Naive thymus-derived CD4-positive, alpha-beta T cell (primary cell): ENCODE measurements at regions of chr4 and their contacts with region 1.

Region 1: DNA sequence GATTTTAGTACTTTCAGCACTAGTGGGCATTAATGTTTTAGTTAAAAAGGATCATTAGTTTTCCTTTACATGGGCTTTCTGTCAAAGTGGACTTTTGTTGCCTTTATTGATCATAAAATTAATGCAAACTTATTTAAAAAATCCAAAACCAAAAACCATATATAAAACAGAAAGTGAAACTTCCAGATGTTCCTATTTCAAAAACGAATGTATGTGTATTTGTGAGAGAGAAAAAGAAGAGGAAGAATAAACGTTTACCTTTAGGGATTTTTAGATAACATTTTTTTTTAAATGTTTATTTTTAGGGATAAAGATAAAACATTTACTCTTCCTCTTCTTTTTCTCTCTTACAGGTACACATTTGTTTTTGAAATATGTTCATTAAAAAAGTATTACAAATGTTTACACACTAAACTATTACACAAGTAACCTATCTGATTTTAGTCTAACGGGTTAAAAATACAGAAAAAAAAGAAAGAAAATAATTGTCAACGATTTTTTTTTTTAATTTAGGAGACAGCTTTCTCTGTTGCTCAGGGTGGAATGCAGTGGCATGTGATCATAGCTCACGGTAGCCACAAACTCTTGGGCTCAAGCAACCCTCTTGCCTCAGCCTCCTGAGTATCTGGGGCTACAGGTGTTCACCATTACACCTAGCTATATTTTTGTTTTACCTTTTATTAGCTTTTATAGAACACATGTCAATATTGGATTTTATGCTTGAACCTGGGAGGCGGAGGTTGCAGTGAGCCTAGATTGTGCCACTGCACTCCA is 16.8 kb upstream of the COX18 start:
- DNase-seq: peak in 1 of 9 donors; percentile 4
- ATAC-seq: no peak
- H3K4me3 ChIP-seq: peak overlapping the region; percentile 25
- H3K4me3 Mint-ChIP-seq: peak overlapping the region; percentile 60 to 76 (median 72)
- H3K27ac ChIP-seq: peak overlapping the region; percentile 65
- H3K27ac Mint-ChIP-seq: peak overlapping the region; percentile 38 to 80 (median 63)
- H3K4me1 ChIP-seq: no peaks in the 10 kb centered on the region
- H3K4me1 Mint-ChIP-seq: peaks cover 10 to 28% (median 16%) of the 10 kb centered on the region in 7 donors
- H3K27me3 ChIP-seq: no peaks in the 10 kb centered on the region
- H3K27me3 Mint-ChIP-seq: no peaks in the 10 kb centered on the region

Region 2: DNA sequence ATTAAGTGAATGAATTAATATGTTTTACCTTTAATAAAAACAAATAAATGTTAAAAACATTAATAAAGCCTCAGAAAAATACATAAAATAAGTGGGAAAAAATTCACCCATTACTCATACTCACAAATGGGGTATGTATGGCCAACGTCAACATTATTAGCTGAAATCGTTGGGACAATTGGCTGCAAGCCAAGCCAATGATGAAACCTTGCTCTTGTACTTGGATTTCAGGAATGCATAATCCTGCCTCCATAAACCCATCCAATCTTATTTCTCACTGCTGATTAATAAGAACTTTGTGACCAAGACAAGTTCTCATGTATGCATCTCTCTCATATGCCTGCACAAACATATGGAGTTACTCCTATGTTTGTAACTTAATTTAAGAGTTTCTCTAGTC is 482.0 kb before region 1 on chr4:
- CTCF ChIA-PET with region 1: no interaction called
- POLR2A ChIA-PET with region 1: no interaction called
- intact Hi-C with region 1: no loop called
- DNase-seq: no peak
- ATAC-seq: no peak
- H3K4me3 ChIP-seq: no peak overlapping the region
- H3K4me3 Mint-ChIP-seq: no peak overlapping the region
- H3K27ac ChIP-seq: no peak overlapping the region
- H3K27ac Mint-ChIP-seq: no peak overlapping the region
- H3K4me1 ChIP-seq: no peaks in the 10 kb centered on the region
- H3K4me1 Mint-ChIP-seq: no peaks in the 10 kb centered on the region
- H3K27me3 ChIP-seq: peaks cover 0 to 5% of the 10 kb centered on the region in 2 donors
- H3K27me3 Mint-ChIP-seq: no peaks in the 10 kb centered on the region

Region 3: GRCh38 chr4:73069338-73070073 is 16.8 kb before region 1 on chr4 and contains the start of gene COX18:
- CTCF ChIA-PET with region 1: no interaction called
- POLR2A ChIA-PET with region 1: interaction called, 6 read pairs
- intact Hi-C with region 1: loop called (anchors 1 kb)
- DNase-seq: peak; percentile 90 to 93 (median 91)
- ATAC-seq: peak; percentile 87
- H3K4me3 ChIP-seq: peak within 1 kb of the TSS; percentile 79
- H3K4me3 Mint-ChIP-seq: peak within 1 kb of the TSS; percentile 86 to 97 (median 90)
- H3K27ac ChIP-seq: peak within 1 kb of the TSS; percentile 98
- H3K27ac Mint-ChIP-seq: peak within 1 kb of the TSS; percentile 93 to 99 (median 98)
- H3K4me1 ChIP-seq: peaks cover 25 to 29% of the 10 kb centered on the region in 2 donors
- H3K4me1 Mint-ChIP-seq: peaks cover 24 to 46% (median 39%) of the 10 kb centered on the region in 7 donors
- H3K27me3 ChIP-seq: no peaks in the 10 kb centered on the region
- H3K27me3 Mint-ChIP-seq: no peaks in the 10 kb centered on the region
- total RNA-seq, gene COX18: 11.1 to 18.4 (median 14.0) TPM